ENCODE measurements at regions of chr6 and their contacts with region 1.

Region 1: DNA sequence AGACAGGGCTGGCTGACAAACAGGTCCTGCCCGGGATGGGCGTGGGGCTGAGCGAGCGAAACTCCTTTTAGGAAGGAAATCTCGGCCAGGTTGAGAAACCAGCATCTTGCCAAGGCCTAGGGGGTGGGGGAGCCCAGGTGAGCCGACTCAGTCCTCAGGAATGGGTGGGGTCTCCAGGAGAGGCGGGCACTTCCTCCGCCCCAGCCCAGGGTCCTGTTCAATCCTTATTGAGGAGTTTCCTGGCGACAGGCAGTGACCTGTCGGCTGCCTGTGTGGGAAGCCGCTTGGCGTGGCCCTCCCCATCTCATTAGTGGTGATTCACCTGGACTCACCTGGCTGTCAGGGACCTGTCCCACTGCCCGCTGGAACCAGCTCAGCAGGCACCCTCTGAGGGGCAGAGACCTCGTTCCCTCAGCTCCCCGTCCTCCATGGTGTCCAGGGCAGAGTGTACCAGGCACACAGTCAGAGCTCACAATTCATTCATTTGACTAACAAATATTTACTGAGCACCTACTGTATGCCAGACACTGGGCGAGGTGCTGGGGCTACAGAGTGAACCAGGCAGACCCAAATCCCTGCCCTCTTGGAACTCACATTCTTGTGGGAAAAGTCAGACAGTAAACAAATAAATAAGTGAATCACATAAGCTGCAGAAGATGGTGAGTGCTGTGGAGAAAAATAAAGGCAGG is 51.1 kb downstream of the FGD2 start:
- DNase-seq: peak; percentile 97
- H3K4me3 ChIP-seq: peak overlapping the region; percentile 48; the same call in 1 of the 2 replicates
- H3K27ac ChIP-seq: peak overlapping the region; percentile 100
- H3K4me1 ChIP-seq: peaks cover 87% of the 10 kb centered on the region
- H3K27me3 ChIP-seq: no peaks in the 10 kb centered on the region
- CTCF ChIP-seq: no peak

Region 2: GRCh38 chr6:36735110-36736071 is 321.2 kb before region 1 on chr6:
- CTCF ChIA-PET with region 1: no interaction called
- POLR2A ChIA-PET with region 1: no interaction called
- intact Hi-C with region 1: no loop called
- DNase-seq: peak in 1 of 2 experiments; percentile 35
- H3K4me3 ChIP-seq: no peak overlapping the region
- H3K27ac ChIP-seq: no peak overlapping the region
- H3K4me1 ChIP-seq: no peaks in the 10 kb centered on the region
- H3K27me3 ChIP-seq: no peaks in the 10 kb centered on the region
- CTCF ChIP-seq: no peak

Region 3: DNA sequence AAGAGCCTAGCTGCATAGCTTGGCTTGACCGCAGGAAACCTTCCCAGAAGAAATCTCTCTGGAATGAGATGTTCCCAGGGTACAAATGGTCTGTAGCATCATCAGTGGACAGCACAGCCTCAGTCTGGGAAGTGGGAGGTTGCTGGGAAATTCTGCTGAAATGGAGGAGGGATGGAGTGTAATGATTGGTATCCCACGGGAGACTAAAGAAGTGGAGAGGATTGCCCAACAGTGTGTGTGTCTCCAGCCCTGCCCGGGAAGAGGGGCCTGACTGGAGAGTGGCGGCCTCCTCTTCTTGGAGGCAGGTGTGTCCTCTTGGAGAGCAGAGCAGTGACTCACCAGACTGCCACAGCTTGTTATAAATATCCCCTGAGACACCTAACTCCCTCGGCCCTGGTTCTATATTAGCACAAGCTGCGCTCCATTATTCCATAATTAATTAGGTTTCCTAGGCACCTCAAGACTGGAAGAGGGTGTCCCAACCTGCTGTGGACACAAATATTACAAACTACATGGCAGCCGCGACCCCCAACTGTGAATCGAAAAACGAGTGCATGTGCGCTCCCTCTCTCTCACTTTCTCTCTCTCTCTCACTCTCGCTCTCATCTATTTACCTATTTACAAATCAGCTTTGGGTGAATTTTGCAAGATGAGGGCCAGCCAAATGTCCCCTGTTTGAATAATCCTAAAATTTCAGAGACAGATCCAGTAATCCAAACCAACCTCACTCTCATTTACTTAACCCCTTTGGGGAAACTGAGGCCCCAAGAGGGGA is 17.7 kb after region 1 on chr6:
- CTCF ChIA-PET with region 1: interaction called, 4 read pairs
- POLR2A ChIA-PET with region 1: no interaction called
- intact Hi-C with region 1: loop called (anchors 1 kb)
- DNase-seq: peak; percentile 44 to 51
- H3K4me3 ChIP-seq: no peak overlapping the region
- H3K27ac ChIP-seq: no peak overlapping the region
- H3K4me1 ChIP-seq: peaks cover 44% of the 10 kb centered on the region
- H3K27me3 ChIP-seq: no peaks in the 10 kb centered on the region
- CTCF ChIP-seq: no peak

Region 4: DNA sequence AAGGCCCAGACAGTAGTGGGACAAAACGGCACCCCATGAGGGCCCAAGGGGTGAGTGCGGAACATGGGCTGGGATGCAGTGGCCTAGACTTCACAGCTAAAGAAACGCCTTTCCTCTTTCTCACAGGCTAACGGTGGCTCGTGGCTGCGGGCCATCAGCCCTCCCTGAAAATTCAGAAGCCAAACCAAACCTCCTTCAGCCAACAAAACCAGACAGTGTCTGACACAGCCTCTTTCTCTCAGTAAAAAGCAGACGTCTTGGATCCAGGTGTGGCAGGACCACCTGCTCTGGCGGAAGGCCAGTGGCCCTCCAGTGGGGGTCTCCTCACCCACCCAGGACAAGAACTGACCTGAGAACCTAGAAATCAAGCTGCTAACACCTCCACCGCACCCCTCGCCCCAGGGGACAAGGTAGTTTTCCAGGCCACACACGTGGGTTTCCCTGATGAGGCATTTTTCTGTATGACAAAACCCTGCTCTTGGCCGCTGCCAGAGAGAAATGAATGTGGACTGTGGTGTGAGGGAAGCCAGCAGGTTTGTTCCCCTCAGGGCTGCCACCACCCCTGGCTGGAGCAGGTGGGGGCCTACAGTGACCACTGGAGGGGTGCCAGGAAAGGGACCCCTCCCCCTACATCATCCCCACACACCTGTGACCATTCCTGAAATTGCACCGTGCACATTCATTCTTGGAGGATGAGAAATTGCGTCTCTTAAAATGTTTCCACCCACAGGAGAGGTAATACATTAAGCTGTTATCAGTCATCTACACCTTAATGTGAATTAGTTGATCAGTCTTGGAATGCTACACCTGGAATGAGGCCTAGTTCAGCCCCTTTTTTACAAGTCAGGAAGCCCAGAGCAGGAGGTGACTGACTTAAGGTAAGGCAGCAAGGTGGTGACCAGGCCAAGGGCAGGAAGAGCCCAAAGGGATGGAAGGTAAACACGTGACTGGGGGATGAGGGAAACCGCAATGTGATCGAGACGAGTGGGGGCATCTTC is 36.6 kb after region 1 on chr6:
- CTCF ChIA-PET with region 1: interaction called, 5 read pairs
- POLR2A ChIA-PET with region 1: interaction called, 4 read pairs
- intact Hi-C with region 1: loop called (anchors 1 kb)
- DNase-seq: peak; percentile 95 to 99
- H3K4me3 ChIP-seq: peak overlapping the region; percentile 15; the same call in 1 of the 2 replicates
- H3K27ac ChIP-seq: peak overlapping the region; percentile 93
- H3K4me1 ChIP-seq: peaks cover 50% of the 10 kb centered on the region
- H3K27me3 ChIP-seq: no peaks in the 10 kb centered on the region
- CTCF ChIP-seq: no peak

Region 5: GRCh38 chr6:37102279-37103168 is 45.9 kb after region 1 on chr6:
- CTCF ChIA-PET with region 1: interaction called, 7 read pairs
- POLR2A ChIA-PET with region 1: interaction called, 14 read pairs
- intact Hi-C with region 1: loop called (anchors 1 kb)
- DNase-seq: peak; percentile 77 to 87
- H3K4me3 ChIP-seq: peak overlapping the region; percentile 43; the same call in 1 of the 2 replicates
- H3K27ac ChIP-seq: peak overlapping the region; percentile 97
- H3K4me1 ChIP-seq: peaks cover 55% of the 10 kb centered on the region
- H3K27me3 ChIP-seq: no peaks in the 10 kb centered on the region
- CTCF ChIP-seq: no peak

Region 6: GRCh38 chr6:37125783-37126492 is 69.4 kb after region 1 on chr6:
- CTCF ChIA-PET with region 1: interaction called, 3 read pairs
- POLR2A ChIA-PET with region 1: interaction called, 13 read pairs
- intact Hi-C with region 1: loop called (anchors 1 kb)
- DNase-seq: peak; percentile 28 to 71
- H3K4me3 ChIP-seq: peak overlapping the region; percentile 23; the same call in 1 of the 2 replicates
- H3K27ac ChIP-seq: peak overlapping the region; percentile 95
- H3K4me1 ChIP-seq: peaks cover 60% of the 10 kb centered on the region
- H3K27me3 ChIP-seq: no peaks in the 10 kb centered on the region
- CTCF ChIP-seq: no peak

Region 7: GRCh38 chr6:37131104-37131959 is 74.7 kb after region 1 on chr6:
- CTCF ChIA-PET with region 1: interaction called, 3 read pairs
- POLR2A ChIA-PET with region 1: interaction called, 13 read pairs
- intact Hi-C with region 1: loop called (anchors 1 kb)
- DNase-seq: peak; percentile 66 to 73
- H3K4me3 ChIP-seq: peak overlapping the region; percentile 51; the same call in 1 of the 2 replicates
- H3K27ac ChIP-seq: peak overlapping the region; percentile 95
- H3K4me1 ChIP-seq: peaks cover 93% of the 10 kb centered on the region
- H3K27me3 ChIP-seq: no peaks in the 10 kb centered on the region
- CTCF ChIP-seq: no peak

Region 8: DNA sequence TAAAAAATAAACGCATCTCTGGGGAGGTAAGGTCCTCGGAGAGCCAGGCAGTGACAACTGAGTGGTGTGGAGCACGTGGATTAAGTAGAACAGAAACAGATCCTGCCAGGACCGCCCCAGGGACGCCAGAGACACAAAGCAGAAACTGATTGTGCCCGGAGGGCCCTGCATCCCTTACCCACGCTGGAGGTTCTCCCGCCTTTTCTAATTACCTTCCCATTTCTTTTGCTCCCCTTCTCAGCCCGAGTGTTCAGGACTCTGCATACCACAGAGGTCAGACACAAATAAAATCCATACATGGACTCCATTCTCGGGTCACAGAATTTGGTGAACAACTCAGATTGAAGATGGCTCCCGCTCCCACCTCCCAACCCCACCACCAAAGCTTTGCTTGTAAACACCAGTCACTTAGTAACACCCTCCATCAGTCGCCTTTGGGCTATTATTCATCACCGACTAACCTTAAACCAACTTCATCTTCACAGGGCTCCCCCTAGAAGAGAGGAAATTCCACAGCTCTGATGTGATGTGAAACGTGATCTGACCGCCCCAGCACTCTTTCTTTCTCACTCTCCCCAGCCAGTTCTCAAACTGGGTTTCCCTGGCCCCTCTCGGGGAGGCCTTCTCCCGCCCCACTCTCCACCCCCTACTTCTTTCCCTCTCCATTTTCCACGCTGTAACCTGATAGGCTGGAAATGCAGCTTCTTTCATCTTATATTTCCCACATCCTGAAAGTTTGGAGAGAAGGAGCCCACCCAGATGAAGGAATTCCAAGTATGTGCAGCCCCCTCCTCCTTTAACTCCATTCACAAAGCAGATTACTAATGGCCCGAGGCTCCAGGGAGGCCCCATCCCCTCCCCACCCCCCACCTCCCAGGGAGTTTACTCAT is 80.9 kb after region 1 on chr6:
- CTCF ChIA-PET with region 1: interaction called, 3 read pairs
- POLR2A ChIA-PET with region 1: interaction called, 20 read pairs
- intact Hi-C with region 1: loop called (anchors 1 kb)
- DNase-seq: peak; percentile 81 to 98
- H3K4me3 ChIP-seq: peak overlapping the region; percentile 56
- H3K27ac ChIP-seq: peak overlapping the region; percentile 98
- H3K4me1 ChIP-seq: peaks cover 88% of the 10 kb centered on the region
- H3K27me3 ChIP-seq: no peaks in the 10 kb centered on the region
- CTCF ChIP-seq: no peak

Measured in PC-9 (cell line).